GM12878 (cell line): ENCODE measurements at regions of chr5 and their contacts with region 1.

Region 1: DNA sequence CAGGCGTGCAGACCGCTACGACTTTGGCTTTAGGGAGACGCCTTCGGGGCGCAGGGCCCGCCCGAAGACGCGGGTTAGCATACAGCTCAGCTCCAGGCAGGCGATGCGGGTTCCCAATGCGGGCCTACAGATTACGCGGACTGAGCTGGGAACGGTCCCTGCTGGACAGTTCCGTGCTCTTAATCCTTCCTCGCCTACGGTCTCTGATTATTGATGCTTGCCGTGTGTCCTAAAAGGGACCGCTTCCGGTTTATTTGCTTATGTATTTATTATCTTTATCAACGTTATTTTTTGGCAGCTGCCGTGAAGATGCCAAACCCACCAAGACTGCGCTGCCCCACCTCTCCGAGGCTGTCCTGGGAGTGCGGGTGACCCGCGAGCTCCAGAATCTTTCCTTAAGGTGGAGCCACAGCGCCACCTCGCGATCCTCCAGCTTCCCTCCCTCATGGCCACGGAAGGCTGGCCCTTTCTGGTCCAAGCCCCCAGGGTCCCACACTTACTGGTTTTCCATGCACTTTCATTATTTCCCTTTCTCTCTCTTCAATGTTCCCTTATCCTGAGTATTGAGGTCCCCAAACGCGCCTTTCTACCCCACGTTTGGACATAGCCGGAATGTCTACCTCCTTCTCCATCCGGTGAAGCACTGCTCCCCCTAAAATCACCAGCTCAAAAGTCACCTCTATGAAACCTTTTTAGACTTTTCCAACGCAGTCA is 7.0 kb upstream of the EBF1 start:
- DNase-seq: no peak
- ATAC-seq: peak; percentile 83
- H3K4me3 ChIP-seq: peak overlapping the region; percentile 61
- H3K27ac ChIP-seq: no peak overlapping the region
- H3K4me1 ChIP-seq: peaks cover 12% of the 10 kb centered on the region
- H3K27me3 ChIP-seq: no peaks in the 10 kb centered on the region; a peak in 2 of 4 replicates
- CTCF ChIP-seq: peak; percentile 84 to 94 (median 92)
- EP300 ChIP-seq: no peak
- POLR2A ChIP-seq: no peak
- RAD21 ChIP-seq: peak; percentile 95

Region 2: DNA sequence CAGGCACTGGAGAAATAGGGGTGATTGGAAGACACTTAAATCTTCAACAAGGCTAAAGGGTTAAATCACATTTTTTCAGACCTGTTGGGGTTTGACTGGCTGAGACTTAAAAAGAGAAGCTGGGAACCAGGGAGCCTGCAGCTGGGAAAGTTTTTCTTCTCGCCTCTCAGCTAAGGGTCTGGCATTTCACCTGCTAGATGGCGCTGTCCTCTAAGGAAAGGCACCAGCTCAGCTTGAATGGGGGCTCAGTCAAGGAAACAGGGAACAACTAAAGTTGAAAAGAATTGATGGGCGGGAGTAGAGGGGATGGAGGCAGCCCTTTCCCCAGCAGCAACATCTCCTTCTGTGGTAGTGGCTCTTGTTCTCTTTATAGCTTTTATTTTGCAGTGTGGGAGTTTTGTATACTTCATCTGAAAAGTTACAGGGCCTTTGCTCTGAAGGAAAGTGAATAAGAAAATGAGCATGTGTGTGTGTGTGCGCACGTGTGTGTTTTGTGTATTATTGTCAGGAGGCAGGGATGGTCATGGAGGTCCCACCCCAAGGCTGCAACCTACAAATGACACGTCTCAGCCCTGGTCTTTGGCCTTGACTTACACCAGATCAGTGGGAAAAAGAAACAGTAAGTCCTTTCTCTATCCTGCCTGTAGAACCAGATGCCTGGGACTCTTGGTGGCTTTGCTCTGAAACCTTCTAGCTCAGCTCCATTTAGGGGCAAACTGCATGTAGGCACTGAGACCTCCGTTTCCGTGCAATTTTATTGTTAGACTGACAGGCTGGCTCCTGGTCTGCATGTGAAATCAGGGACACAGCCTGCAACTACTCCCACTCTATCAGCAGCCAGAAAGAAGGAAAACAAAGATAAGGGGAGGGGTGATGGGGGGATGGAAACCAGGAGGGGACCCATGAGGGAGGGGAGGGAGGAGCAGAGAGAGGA is 931.5 kb before region 1 on chr5:
- CTCF ChIA-PET with region 1: interaction called, 137 read pairs
- POLR2A ChIA-PET with region 1: no interaction called
- RAD21 ChIA-PET with region 1: interaction called, 96 read pairs
- SMC1A ChIA-PET with region 1: interaction called, 100 read pairs
- in situ Hi-C with region 1: loop called (anchors 5 kb)
- intact Hi-C with region 1: loop called (anchors 1 kb)
- DNase-seq: peak; percentile 27
- ATAC-seq: peak; percentile 97
- H3K4me3 ChIP-seq: no peak overlapping the region
- H3K27ac ChIP-seq: no peak overlapping the region
- H3K4me1 ChIP-seq: no peaks in the 10 kb centered on the region
- H3K27me3 ChIP-seq: peaks cover 0 to 1% of the 10 kb centered on the region in 2 experiments; a peak in 1 of 4 replicates
- CTCF ChIP-seq: peak; percentile 81 to 87 (median 84)
- EP300 ChIP-seq: no peak
- POLR2A ChIP-seq: no peak
- RAD21 ChIP-seq: peak; percentile 99

Region 3: DNA sequence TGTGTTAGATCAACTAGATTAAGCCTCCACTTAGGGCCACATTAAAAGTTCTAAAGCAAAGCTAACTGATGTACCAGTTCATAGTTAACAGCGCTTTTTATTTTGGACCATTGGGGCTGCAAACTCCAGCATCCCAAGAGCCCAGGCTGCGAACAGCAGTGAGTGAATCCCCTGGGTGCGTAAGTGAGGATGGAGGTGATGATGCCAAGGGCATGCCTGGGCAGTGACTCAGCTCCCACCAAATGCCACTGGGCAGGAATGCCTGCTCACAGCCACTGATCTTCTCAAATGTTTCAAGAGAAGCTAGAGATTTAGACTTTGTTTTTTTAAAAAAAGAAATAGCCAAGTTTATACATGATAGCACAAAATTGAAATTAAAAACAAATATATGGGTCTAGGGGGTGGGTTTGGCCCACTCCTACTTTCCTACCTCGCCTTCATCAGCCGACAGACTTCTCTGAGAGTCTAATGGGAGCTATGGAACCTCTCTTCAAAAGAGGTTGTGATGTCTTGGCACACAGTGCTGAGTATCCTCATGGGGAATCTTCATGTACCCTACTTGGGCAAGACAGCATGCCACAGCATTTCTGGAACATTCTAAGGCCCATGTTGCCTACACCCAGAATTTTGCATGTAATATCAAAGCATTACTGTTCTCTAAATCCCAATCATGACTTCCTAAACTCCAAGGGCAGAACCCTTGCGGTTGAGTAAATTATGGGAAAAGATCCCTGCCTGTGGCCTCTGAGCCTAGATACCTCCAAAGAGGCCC is 405.1 kb before region 1 on chr5:
- CTCF ChIA-PET with region 1: interaction called, 60 read pairs
- POLR2A ChIA-PET with region 1: no interaction called
- RAD21 ChIA-PET with region 1: interaction called, 210 read pairs
- SMC1A ChIA-PET with region 1: interaction called, 224 read pairs
- in situ Hi-C with region 1: loop called (anchors 5 kb)
- intact Hi-C with region 1: no loop called
- DNase-seq: no peak
- ATAC-seq: no peak
- H3K4me3 ChIP-seq: no peak overlapping the region
- H3K27ac ChIP-seq: no peak overlapping the region
- H3K4me1 ChIP-seq: no peaks in the 10 kb centered on the region
- H3K27me3 ChIP-seq: no peaks in the 10 kb centered on the region
- CTCF ChIP-seq: no peak
- EP300 ChIP-seq: no peak
- POLR2A ChIP-seq: no peak
- RAD21 ChIP-seq: no peak

Region 4: DNA sequence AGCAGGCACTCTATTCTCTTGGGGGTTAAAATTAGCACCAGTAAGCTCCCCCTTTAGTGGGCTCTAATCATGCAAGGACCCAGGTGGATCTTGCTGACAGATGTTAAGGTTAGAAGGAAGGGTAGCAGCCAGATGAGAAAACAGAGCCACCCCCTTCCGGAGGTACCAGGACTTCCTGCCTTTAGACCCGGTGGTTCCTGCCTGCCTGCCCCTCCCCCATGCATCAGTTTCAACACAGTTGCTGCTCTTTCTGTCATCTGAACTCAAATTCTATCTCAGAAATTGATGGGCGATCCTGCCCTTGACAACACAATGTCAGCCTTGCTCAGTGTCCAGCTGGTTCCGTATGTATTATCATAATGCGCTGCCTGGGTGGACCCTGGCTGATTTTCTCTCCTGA is 294.3 kb before region 1 on chr5:
- CTCF ChIA-PET with region 1: interaction called, 5 read pairs
- POLR2A ChIA-PET with region 1: no interaction called
- RAD21 ChIA-PET with region 1: interaction called, 4 read pairs
- SMC1A ChIA-PET with region 1: interaction called, 13 read pairs
- in situ Hi-C with region 1: no loop called
- intact Hi-C with region 1: no loop called
- DNase-seq: peak; percentile 51
- ATAC-seq: peak; percentile 82
- H3K4me3 ChIP-seq: no peak overlapping the region
- H3K27ac ChIP-seq: peak overlapping the region; percentile 17; the same call in 1 of the 2 replicates
- H3K4me1 ChIP-seq: peaks cover 16% of the 10 kb centered on the region; the same call in 1 of the 2 replicates
- H3K27me3 ChIP-seq: no peaks in the 10 kb centered on the region
- CTCF ChIP-seq: no peak
- EP300 ChIP-seq: no peak
- POLR2A ChIP-seq: no peak
- RAD21 ChIP-seq: 0 out of 2 replicates have a peak, but pooled peaks have one; percentile 3

Region 5: GRCh38 chr5:158921441-158922262 is 185.1 kb before region 1 on chr5:
- CTCF ChIA-PET with region 1: interaction called, 3 read pairs
- POLR2A ChIA-PET with region 1: interaction called, 6 read pairs
- RAD21 ChIA-PET with region 1: interaction called, 10 read pairs
- SMC1A ChIA-PET with region 1: interaction called, 12 read pairs
- in situ Hi-C with region 1: no loop called
- intact Hi-C with region 1: no loop called
- DNase-seq: peak; percentile 75
- ATAC-seq: peak; percentile 70
- H3K4me3 ChIP-seq: no peak overlapping the region
- H3K27ac ChIP-seq: peak overlapping the region; percentile 45
- H3K4me1 ChIP-seq: peaks cover 3% of the 10 kb centered on the region
- H3K27me3 ChIP-seq: no peaks in the 10 kb centered on the region
- CTCF ChIP-seq: no peak
- EP300 ChIP-seq: peak; percentile 91 to 98
- POLR2A ChIP-seq: no peak
- RAD21 ChIP-seq: no peak

Region 6: GRCh38 chr5:159133041-159133741 is 26.5 kb after region 1 on chr5:
- CTCF ChIA-PET with region 1: interaction called, 52 read pairs
- POLR2A ChIA-PET with region 1: no interaction called
- RAD21 ChIA-PET with region 1: interaction called, 15 read pairs
- SMC1A ChIA-PET with region 1: interaction called, 13 read pairs
- in situ Hi-C with region 1: no loop called
- intact Hi-C with region 1: no loop called
- DNase-seq: peak; percentile 28
- ATAC-seq: peak; percentile 89
- H3K4me3 ChIP-seq: no peak overlapping the region
- H3K27ac ChIP-seq: no peak overlapping the region
- H3K4me1 ChIP-seq: no peaks in the 10 kb centered on the region
- H3K27me3 ChIP-seq: 0 out of 4 replicates have a peak, but pooled peaks cover 0 to 4% of the 10 kb centered on the region in 2 experiments
- CTCF ChIP-seq: peak; percentile 64 to 83 (median 73)
- EP300 ChIP-seq: no peak; a peak in 1 of 4 replicates
- POLR2A ChIP-seq: no peak
- RAD21 ChIP-seq: peak; percentile 88